Dendritic cell treated with granulocyte-macrophage colony-stimulating factor and Interleukin-4, amounts not matched to agents 40 ng/mL and 50 ng/mL, for 4 days (primary cell): ENCODE measurements at regions of chr12 and their contacts with region 1.

Region 1: DNA sequence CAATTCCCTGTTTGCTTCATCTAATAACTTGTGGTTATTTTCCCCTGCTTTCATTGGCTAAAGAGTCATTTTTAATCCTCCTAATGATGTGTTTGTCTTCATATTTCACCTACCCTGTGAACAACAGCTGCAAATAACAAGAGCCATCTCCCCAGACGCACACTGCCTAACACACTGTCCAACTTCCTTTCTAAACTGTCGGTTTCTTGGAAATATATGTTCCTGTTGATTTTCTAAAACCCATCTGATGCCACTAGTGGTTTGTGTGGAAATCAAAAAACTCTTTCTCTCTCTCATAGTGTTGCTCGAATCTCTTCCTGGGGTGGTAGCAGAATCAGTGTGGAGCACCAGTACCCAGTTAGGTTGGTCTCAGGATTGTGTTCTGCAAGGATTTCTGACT is 226.9 kb downstream of the EPS8 start:
- H3K4me3 Mint-ChIP-seq: peak overlapping the region; percentile 33
- H3K27ac Mint-ChIP-seq: peak overlapping the region; percentile 89
- H3K4me1 Mint-ChIP-seq: peaks cover 48% of the 10 kb centered on the region
- H3K27me3 Mint-ChIP-seq: no peaks in the 10 kb centered on the region

Region 2: DNA sequence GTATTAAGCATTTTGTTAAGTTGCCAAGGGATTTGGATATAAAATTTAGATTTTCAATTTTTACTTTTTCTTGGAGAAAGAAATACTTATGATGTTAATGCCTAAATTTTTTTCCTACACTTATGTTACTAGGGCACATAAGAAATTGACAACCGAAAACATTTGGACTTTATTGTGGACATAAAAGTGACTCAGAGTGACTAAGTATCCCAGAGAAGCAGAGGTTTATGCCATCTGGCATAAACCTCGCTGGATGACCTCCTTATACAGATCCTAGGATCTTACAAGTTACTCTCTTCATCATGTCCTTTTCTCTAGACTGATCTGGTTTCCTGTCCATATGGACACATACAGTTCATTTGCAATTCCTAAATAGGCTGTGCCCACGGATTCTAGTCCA is 430.8 kb before region 1 on chr12:
- intact Hi-C with region 1: no loop called
- H3K4me3 Mint-ChIP-seq: no peak overlapping the region
- H3K27ac Mint-ChIP-seq: no peak overlapping the region
- H3K4me1 Mint-ChIP-seq: no peaks in the 10 kb centered on the region
- H3K27me3 Mint-ChIP-seq: no peaks in the 10 kb centered on the region

Region 3: DNA sequence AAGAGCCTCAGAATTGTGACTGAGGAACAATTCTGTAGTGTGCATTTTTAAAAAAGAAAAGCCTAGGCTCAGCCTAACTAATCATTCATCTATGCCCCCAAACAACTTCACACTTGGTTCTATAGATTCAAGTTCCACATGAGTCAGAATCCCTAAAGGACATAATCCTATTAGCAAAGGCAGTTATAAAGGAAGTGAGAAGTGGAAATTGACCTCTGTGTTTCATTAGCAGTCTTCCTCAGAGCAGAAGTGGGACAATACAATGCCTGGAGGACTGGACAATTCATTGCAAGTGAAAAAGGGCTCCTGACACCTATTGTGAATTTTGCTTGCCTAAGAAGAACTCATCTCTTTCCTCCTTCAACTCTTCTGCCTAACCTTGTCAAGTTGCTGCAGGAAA is 17.7 kb before region 1 on chr12:
- intact Hi-C with region 1: loop called (anchors 1 kb)
- H3K4me3 Mint-ChIP-seq: peak overlapping the region; percentile 45
- H3K27ac Mint-ChIP-seq: peak overlapping the region; percentile 90
- H3K4me1 Mint-ChIP-seq: peaks cover 44% of the 10 kb centered on the region
- H3K27me3 Mint-ChIP-seq: no peaks in the 10 kb centered on the region

Region 4: GRCh38 chr12:15629108-15629507 is 66.8 kb after region 1 on chr12:
- intact Hi-C with region 1: no loop called
- H3K4me3 Mint-ChIP-seq: no peak overlapping the region
- H3K27ac Mint-ChIP-seq: peak overlapping the region; percentile 59
- H3K4me1 Mint-ChIP-seq: peaks cover 5% of the 10 kb centered on the region
- H3K27me3 Mint-ChIP-seq: peaks cover 1% of the 10 kb centered on the region

Region 5: DNA sequence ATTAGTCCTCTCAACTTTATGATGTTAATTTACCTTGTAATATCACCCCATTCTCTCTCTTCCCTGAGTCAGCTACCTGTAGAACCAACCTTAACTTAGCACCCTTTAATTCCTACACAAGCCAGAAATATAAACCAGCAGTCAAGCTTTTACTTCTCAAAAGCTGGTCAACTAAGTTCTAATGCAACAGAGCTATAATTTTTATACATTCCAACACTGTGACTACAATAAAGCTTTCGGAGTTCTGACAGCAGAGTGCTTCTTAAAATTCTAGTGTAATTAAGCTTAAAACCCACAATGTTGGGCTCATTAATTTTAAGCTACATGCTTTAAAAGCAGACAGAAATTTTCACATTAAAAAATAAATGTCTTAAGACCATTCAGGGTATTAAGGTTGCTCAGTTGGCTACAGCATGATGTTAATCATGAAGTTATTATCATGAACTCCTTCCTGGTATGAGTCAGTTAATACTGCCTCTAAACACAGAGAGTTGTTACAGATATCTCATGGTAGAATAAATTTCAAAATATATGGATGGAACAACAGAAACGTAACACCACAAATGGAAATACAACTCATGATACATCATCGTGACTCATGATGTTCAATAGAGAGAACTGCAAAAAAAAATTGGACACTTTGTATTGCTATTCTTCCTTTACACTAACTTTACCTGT is 100.2 kb after region 1 on chr12:
- intact Hi-C with region 1: no loop called
- H3K4me3 Mint-ChIP-seq: no peak overlapping the region
- H3K27ac Mint-ChIP-seq: no peak overlapping the region
- H3K4me1 Mint-ChIP-seq: no peaks in the 10 kb centered on the region
- H3K27me3 Mint-ChIP-seq: peaks cover 1% of the 10 kb centered on the region